Sigmoid colon (tissue), 7 donors: ENCODE measurements at regions of chr1 and their contacts with region 1.

Region 1: GRCh38 chr1:162040681-162041080 is 17.0 kb upstream of the OLFML2B start:
- DNase-seq: no peak
- H3K4me3 ChIP-seq: no peak overlapping the region
- H3K27ac ChIP-seq: no peak overlapping the region
- H3K4me1 ChIP-seq: peaks cover 0 to 9% (median 0%) of the 10 kb centered on the region in 4 donors
- H3K27me3 ChIP-seq: no peaks in the 10 kb centered on the region
- CTCF ChIP-seq: no peak
- EP300 ChIP-seq: no peak
- POLR2A ChIP-seq: no peak

Region 2: DNA sequence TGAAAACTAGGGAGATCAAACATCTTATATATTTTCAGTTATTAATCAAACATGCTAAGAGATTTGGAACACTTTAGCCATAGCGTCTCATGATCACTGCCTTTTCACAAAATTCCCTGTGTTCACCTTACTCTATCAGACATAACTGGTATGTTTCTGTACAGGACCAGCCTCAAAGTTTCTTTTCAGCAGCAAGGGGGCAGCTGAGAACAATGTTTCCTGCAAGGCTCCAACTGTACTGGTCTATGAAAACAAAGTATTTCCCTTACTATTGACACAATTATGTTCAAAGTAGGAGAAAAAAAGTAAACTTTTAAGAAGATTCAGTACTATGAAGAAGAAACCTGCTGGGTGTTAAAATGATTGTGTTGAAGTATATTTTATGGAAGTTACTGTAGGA is 176.1 kb before region 1 on chr1:
- intact Hi-C with region 1: loop called (anchors 1 kb)
- DNase-seq: peak; percentile 59
- H3K4me3 ChIP-seq: no peak overlapping the region
- H3K27ac ChIP-seq: peak overlapping the region in 1 of 4 donors; percentile 46
- H3K4me1 ChIP-seq: peaks cover 0 to 33% (median 17%) of the 10 kb centered on the region in 4 donors
- H3K27me3 ChIP-seq: no peaks in the 10 kb centered on the region
- CTCF ChIP-seq: peak in 3 of 4 experiments; percentile 43 to 47 (median 47)
- EP300 ChIP-seq: no peak
- POLR2A ChIP-seq: no peak

Region 3: DNA sequence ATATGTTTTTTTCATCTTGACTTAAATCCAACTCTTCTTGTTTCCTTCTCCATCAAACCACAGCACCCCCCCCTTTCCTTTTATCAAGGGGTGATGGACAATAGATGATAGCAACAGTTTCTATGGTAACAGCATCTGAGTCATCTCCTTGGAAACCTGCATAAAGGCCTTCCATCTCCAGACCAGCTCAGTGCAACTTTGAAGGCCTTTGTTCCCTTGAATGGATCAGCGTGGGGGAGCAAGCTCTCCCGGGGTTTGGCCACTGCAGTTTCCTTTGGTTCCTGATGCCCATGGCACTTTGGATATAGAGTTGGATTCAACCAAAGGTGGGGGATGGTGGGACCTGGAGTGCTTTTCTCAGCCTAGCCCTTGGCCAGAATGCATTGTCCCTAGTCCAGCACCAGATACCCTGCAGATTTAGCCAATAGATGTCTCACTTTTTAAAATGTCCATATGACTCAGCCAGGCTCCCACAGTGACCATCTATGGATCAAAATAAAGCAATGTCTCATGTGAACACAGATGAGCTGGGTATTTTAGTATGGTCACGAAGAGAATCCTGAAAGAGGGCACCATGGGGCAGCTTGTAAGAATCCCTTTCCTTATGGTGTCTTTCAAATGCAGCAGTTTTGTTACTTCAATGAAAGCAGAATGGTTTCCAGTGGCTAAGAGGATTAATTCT is 208.3 kb after region 1 on chr1:
- intact Hi-C with region 1: no loop called
- DNase-seq: no peak
- H3K4me3 ChIP-seq: no peak overlapping the region
- H3K27ac ChIP-seq: no peak overlapping the region
- H3K4me1 ChIP-seq: peaks cover 0 to 9% (median 1%) of the 10 kb centered on the region in 4 donors
- H3K27me3 ChIP-seq: no peaks in the 10 kb centered on the region
- CTCF ChIP-seq: no peak
- EP300 ChIP-seq: no peak
- POLR2A ChIP-seq: no peak